ENCODE measurements at regions of chr3 and their contacts with region 1.

Region 1: GRCh38 chr3:113019182-113020137 is 28.7 kb downstream of the GTPBP8 start:
- DNase-seq: peak; percentile 94
- H3K4me3 Mint-ChIP-seq: peak overlapping the region; percentile 89
- H3K27ac Mint-ChIP-seq: peak overlapping the region; percentile 97
- H3K4me1 Mint-ChIP-seq: peaks cover 40% of the 10 kb centered on the region
- H3K27me3 Mint-ChIP-seq: no peaks in the 10 kb centered on the region

Region 2: GRCh38 chr3:112973325-112974177 is 45.9 kb before region 1 on chr3:
- intact Hi-C with region 1: loop called (anchors 1 kb)
- DNase-seq: peak; percentile 86
- H3K4me3 Mint-ChIP-seq: peak overlapping the region; percentile 85
- H3K27ac Mint-ChIP-seq: peak overlapping the region; percentile 93
- H3K4me1 Mint-ChIP-seq: peaks cover 67% of the 10 kb centered on the region
- H3K27me3 Mint-ChIP-seq: no peaks in the 10 kb centered on the region

Region 3: DNA sequence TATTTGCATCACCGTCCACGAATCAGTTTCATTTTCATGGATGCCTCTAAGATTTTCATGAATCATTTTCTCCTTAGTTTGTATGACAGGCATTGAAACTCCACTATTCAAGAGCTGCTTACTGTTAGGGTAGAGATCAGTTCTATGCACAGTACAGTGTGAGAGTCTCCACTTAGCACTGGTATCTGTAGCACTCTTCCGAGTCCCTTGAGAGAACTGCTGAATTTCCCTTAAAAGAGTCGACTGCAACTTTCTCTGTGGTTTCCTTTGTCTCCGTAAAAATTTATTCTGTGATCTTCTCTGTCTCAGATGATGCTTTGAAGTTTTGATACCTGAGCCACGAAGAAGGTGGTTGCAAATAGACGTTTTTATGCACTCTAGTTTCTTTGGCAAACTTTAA is 13.8 kb before region 1 on chr3:
- intact Hi-C with region 1: loop called (anchors 1 kb)
- DNase-seq: peak; percentile 77
- H3K4me3 Mint-ChIP-seq: peak overlapping the region; percentile 77
- H3K27ac Mint-ChIP-seq: peak overlapping the region; percentile 88
- H3K4me1 Mint-ChIP-seq: peaks cover 56% of the 10 kb centered on the region
- H3K27me3 Mint-ChIP-seq: no peaks in the 10 kb centered on the region

Region 4: DNA sequence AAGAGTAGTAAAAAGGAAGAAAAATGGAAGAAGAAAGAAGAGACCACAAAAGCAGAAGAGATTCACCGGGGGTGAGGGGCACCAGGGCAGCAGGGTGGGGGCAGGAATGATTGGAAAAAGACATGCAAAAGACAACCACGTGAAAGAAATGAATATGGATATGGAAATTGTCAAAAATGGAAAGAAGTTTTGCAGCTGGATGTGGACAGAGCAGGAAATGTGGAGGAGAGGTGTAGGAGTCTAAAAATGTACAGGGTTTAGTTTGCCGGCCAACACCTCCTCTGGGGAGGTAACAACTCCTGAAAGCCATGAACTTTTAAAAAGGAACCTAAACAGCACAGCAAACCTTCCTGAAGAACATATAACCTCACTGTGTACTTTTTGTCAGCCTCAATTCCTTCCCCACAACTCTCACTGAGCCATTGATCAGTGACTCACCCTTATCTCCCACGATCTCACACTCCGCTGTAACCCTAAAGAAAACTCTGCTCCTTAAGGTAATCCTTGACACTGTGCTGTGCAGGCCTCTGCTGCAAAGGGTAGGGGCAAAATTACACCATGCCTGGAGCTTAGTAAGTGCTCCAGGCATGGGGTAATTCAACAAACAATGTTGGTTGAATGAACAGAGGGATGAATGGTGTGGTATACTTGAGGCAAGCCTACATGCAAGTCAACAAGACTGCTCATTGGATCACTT is 91.7 kb after region 1 on chr3:
- intact Hi-C with region 1: loop called (anchors 1 kb)
- DNase-seq: peak; percentile 62
- H3K4me3 Mint-ChIP-seq: no peak overlapping the region
- H3K27ac Mint-ChIP-seq: peak overlapping the region; percentile 46
- H3K4me1 Mint-ChIP-seq: peaks cover 22% of the 10 kb centered on the region
- H3K27me3 Mint-ChIP-seq: no peaks in the 10 kb centered on the region

Region 5: DNA sequence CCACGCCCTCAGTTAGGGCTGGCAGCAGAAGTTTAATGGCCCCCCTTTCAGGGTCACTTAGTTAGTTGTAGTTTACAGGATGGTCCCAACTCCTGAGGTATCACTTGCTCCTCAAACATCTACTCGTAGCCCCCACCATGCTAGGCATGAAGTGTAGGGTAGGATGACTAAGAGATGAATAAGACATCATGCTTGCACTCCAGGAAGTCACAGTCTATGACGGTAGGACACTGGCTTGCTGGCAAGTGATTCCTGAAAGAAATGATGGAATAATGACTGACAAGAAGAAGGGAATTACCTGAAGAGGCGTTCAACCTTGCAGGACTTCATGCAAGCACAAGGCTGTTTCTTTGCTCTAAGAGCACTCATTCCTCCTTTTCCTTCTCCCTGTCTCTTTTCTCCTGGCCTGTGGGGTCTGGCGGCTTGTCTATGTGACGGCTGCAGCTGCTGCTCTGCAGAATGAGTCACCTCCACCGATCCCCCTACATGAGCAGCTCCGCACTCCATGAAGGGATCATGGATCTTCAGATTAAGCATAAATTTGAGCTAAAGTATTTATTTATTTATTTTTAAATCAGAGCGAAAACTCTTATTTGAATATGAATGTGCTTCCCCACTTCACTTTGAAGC is 109.0 kb after region 1 on chr3:
- intact Hi-C with region 1: no loop called
- DNase-seq: no peak
- H3K4me3 Mint-ChIP-seq: no peak overlapping the region
- H3K27ac Mint-ChIP-seq: no peak overlapping the region
- H3K4me1 Mint-ChIP-seq: peaks cover 2% of the 10 kb centered on the region
- H3K27me3 Mint-ChIP-seq: no peaks in the 10 kb centered on the region

Region 6: GRCh38 chr3:113231827-113232253 is 212.4 kb after region 1 on chr3:
- intact Hi-C with region 1: no loop called
- DNase-seq: no peak
- H3K4me3 Mint-ChIP-seq: no peak overlapping the region
- H3K27ac Mint-ChIP-seq: no peak overlapping the region
- H3K4me1 Mint-ChIP-seq: peaks cover 2% of the 10 kb centered on the region
- H3K27me3 Mint-ChIP-seq: peaks cover 7% of the 10 kb centered on the region

Region 7: GRCh38 chr3:113696658-113697499 is 677.4 kb after region 1 on chr3:
- intact Hi-C with region 1: loop called (anchors 5 kb)
- DNase-seq: peak; percentile 100
- H3K4me3 Mint-ChIP-seq: no peak overlapping the region
- H3K27ac Mint-ChIP-seq: no peak overlapping the region
- H3K4me1 Mint-ChIP-seq: peaks cover 27% of the 10 kb centered on the region
- H3K27me3 Mint-ChIP-seq: no peaks in the 10 kb centered on the region

Region 8: GRCh38 chr3:114213627-114214541 is 1194.4 kb after region 1 on chr3:
- intact Hi-C with region 1: loop called (anchors 10 kb)
- DNase-seq: peak; percentile 89
- H3K4me3 Mint-ChIP-seq: no peak overlapping the region
- H3K27ac Mint-ChIP-seq: no peak overlapping the region
- H3K4me1 Mint-ChIP-seq: peaks cover 23% of the 10 kb centered on the region
- H3K27me3 Mint-ChIP-seq: no peaks in the 10 kb centered on the region

Region 9: GRCh38 chr3:114260152-114260551 is 1240.7 kb after region 1 on chr3:
- intact Hi-C with region 1: no loop called
- DNase-seq: no peak
- H3K4me3 Mint-ChIP-seq: no peak overlapping the region
- H3K27ac Mint-ChIP-seq: no peak overlapping the region
- H3K4me1 Mint-ChIP-seq: no peaks in the 10 kb centered on the region
- H3K27me3 Mint-ChIP-seq: peaks cover 2% of the 10 kb centered on the region

Measured in activated CD4-positive, alpha-beta T cell treated with anti-CD3 and anti-CD28 coated beads, Interleukin-2, amount 10 ng/mL, durations not matched to agents 24 days and 14 days (primary cell).